ENCODE measurements at regions of chr12 and their contacts with region 1.

Region 1: DNA sequence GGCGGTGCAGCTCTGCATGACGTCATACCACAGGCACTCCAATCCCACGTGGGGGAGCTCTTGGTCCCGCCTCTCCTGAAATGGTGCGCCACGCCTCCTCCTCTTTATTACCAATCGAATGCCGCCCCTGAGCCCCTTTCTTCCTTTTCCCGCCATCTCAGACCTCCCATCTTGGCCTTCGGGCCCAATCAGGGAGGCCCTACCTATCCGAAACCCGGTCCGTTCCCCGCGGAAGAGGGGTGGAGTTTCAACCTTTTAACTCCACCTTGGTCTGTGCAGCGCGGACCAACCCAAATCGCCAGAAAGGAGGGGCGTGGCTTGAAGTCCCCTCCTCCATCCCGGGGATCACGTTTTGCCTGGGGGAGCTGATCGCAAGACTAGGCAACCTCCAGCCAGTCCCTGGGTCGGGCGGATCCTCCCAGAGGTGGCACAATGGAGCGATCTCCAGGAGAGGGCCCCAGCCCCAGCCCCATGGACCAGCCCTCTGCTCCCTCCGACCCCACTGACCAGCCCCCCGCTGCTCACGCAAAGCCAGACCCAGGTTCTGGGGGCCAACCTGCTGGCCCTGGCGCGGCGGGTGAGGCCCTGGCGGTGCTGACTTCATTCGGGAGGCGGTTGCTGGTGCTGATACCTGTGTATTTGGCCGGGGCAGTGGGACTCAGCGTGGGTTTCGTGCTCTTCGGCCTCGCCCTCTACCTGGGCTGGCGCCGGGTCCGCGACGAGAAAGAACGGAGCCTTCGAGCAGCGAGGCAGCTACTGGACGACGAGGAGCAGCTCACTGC is at the start of gene ESYT1:
- DNase-seq: peak; percentile 88 to 99 (median 98)
- ATAC-seq: peak; percentile 86 to 91 (median 89)
- H3K4me3 ChIP-seq: peak within 1 kb of the TSS; percentile 86 to 95
- H3K4me3 Mint-ChIP-seq: peak within 1 kb of the TSS; percentile 97 to 99 (median 98)
- H3K27ac ChIP-seq: peak within 1 kb of the TSS; percentile 76
- H3K27ac Mint-ChIP-seq: peak within 1 kb of the TSS; percentile 97
- H3K4me1 ChIP-seq: peaks cover 36 to 62% of the 10 kb centered on the region in 2 experiments
- H3K4me1 Mint-ChIP-seq: peaks cover 68 to 74% (median 72%) of the 10 kb centered on the region in 3 donors
- H3K27me3 ChIP-seq: no peaks in the 10 kb centered on the region
- H3K27me3 Mint-ChIP-seq: no peaks in the 10 kb centered on the region
- total RNA-seq, gene ESYT1: 181 to 298 (median 276) TPM

Region 2: DNA sequence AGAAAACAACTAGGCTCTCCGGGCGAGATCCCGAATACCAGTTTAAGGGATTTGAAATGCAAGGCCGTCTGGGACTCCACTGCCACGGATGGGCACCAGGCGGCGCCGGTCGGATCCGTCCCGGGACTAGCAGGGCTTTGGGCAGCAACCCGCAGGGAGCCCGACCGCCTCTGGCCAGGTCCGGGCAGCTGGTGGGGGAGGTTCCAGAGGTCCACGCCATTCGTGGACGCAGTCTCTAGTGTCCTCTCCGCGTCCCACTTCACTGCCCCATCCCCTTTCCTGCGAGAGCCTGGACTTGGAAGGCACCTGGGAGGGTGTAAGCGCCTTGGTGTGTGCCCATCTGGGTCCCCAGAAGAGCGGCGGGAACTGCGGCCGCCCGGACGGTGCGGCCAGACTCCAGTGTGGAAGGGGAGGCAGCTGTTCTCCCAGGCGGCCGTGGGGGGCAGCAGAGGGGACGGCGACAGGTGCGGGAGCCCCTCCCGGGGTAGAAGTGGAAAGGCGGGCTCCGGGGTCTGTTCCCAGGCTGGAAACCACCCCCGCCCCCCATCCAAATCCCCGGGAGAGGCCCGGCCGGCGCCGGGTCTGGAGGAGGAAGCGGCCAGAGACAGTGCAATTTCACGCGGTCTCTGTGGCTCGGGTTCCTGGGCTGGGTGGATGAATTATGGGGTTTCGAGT is 49.0 kb before region 1 on chr12:
- CTCF ChIA-PET with region 1: no interaction called
- POLR2A ChIA-PET with region 1: no interaction called
- DNase-seq: peak in 33 of 35 experiments; percentile 16 to 63 (median 34)
- ATAC-seq: peak; percentile 59 to 74 (median 60)
- H3K4me3 ChIP-seq: peak overlapping the region; percentile 69 to 70
- H3K4me3 Mint-ChIP-seq: peak overlapping the region; percentile 79 to 82 (median 80)
- H3K27ac ChIP-seq: no peak overlapping the region
- H3K27ac Mint-ChIP-seq: no peak overlapping the region
- H3K4me1 ChIP-seq: peaks cover 0 to 27% of the 10 kb centered on the region in 2 experiments
- H3K4me1 Mint-ChIP-seq: peaks cover 7 to 18% (median 9%) of the 10 kb centered on the region in 3 donors
- H3K27me3 ChIP-seq: peaks cover 3 to 48% of the 10 kb centered on the region in 2 experiments
- H3K27me3 Mint-ChIP-seq: peaks cover 0 to 11% of the 10 kb centered on the region in 2 donors

Region 3: GRCh38 chr12:56117778-56118687 is 10.0 kb before region 1 on chr12 and contains the start of gene ZC3H10:
- CTCF ChIA-PET with region 1: interaction called, 3 to 65 read pairs
- POLR2A ChIA-PET with region 1: interaction called, 3 to 33 read pairs
- DNase-seq: peak; percentile 87 to 99 (median 96)
- ATAC-seq: peak; percentile 76 to 79 (median 76)
- H3K4me3 ChIP-seq: peak within 1 kb of the TSS; percentile 79 to 94
- H3K4me3 Mint-ChIP-seq: peak within 1 kb of the TSS; percentile 94 to 99 (median 94)
- H3K27ac ChIP-seq: peak within 1 kb of the TSS; percentile 92
- H3K27ac Mint-ChIP-seq: peak within 1 kb of the TSS; percentile 97 to 98
- H3K4me1 ChIP-seq: peaks cover 11 to 29% of the 10 kb centered on the region in 2 experiments
- H3K4me1 Mint-ChIP-seq: peaks cover 34 to 39% (median 37%) of the 10 kb centered on the region in 3 donors
- H3K27me3 ChIP-seq: no peaks in the 10 kb centered on the region
- H3K27me3 Mint-ChIP-seq: no peaks in the 10 kb centered on the region
- total RNA-seq, gene ZC3H10: 8.4 to 15.1 (median 11.4) TPM

Region 4: DNA sequence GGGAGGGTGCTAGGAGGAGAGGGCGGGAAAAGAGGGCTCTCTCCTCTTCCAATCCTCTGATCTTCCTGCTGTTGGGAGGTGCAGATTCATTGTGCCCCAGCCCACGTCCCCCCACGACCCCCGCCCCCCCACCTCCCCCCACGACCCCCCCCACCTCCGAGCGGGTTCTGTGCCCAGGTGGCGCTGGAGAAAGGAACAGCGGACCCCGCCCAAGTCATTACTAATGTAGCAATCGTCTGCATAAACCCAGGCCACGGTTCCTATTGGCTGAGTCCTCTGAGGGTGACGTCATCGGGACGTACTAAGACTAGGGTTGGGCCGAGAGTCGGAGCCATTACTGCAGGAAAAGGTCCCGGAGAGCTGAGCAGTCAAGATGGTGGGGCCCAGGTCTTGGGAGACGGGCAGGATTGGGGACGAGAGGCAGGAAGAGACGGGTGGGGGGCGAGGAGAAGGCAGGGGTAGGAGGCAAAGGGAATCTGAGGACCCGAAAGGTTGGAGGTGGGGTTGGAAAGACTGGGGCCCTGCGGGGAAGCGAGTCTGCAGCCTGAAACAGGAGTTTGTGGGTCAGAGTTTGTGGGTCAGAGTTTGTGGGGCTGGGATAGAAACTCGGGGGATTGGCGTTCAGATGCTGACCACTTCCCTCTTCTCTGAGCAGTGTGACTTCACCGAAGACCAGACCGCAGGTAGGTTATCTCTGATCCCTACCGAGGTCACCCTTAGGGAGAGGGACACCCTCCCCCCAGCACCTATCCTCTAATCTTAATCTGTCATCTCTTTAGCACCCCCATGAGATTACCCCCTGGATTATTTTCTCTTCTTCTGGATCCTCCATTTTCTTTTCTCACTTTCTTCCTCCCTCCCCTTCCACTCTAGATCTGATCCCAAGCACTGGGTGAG is 30.2 kb after region 1 on chr12 and contains the start of gene MYL6:
- CTCF ChIA-PET with region 1: interaction called in 1 of 2 experiments, 10 read pairs
- POLR2A ChIA-PET with region 1: interaction called in 1 of 2 experiments, 5 read pairs
- DNase-seq: peak; percentile 65 to 97 (median 90)
- ATAC-seq: peak; percentile 85 to 88 (median 86)
- H3K4me3 ChIP-seq: peak within 1 kb of the TSS; percentile 91 to 99
- H3K4me3 Mint-ChIP-seq: peak within 1 kb of the TSS; percentile 89 to 99 (median 97)
- H3K27ac ChIP-seq: peak within 1 kb of the TSS; percentile 93
- H3K27ac Mint-ChIP-seq: peak within 1 kb of the TSS; percentile 94 to 98
- H3K4me1 ChIP-seq: peaks cover 18 to 51% of the 10 kb centered on the region in 2 experiments
- H3K4me1 Mint-ChIP-seq: peaks cover 42 to 56% (median 56%) of the 10 kb centered on the region in 3 donors
- H3K27me3 ChIP-seq: no peaks in the 10 kb centered on the region
- H3K27me3 Mint-ChIP-seq: no peaks in the 10 kb centered on the region
- total RNA-seq, gene MYL6: 506 to 663 (median 569) TPM

Region 5: DNA sequence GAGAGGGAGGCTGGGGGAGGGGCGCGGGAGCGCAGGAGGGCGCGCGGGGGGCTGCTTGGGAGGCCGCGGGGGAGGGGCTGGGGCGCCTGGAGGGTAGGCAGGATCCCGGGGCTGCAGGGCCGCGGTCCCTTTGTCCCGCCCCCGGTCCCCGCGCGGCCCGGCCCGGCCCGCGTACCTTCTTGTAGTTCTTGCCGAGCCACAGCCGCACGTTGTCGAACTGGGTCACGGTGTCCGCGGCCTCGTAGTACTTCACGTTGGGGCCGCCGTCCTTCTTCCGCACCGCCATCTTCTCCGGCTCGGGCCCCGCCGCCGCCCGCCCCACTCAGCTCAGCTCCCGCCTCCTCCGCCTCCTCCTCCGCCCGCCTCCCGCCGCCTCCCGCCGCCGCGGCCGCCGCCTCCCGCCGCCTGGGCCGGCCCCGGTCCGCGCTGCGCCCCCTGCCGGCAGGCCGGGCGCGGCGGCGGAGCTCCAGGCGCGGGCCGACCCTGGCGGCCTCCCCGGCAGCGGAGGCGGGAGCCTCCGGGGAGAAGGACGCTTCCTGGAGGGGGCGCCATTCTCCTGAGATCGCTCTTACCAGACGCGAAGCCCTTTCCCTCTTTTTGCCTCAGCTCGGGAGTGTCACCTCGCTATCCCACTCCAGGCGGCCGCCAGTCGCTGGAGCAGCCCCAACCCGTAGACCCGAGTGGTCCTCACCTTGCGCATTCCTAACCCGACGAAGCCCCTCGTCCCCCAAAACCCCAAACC is 61.3 kb after region 1 on chr12 and contains the start of gene SMARCC2:
- CTCF ChIA-PET with region 1: interaction called, 3 to 54 read pairs
- POLR2A ChIA-PET with region 1: interaction called in 1 of 2 experiments, 3 read pairs
- DNase-seq: peak; percentile 63 to 94 (median 76)
- ATAC-seq: peak; percentile 85 to 91 (median 87)
- H3K4me3 ChIP-seq: peak within 1 kb of the TSS; percentile 71 to 88
- H3K4me3 Mint-ChIP-seq: peak within 1 kb of the TSS; percentile 93 to 98 (median 96)
- H3K27ac ChIP-seq: peak within 1 kb of the TSS; percentile 86
- H3K27ac Mint-ChIP-seq: peak within 1 kb of the TSS; percentile 95 to 97
- H3K4me1 ChIP-seq: peaks cover 12 to 31% of the 10 kb centered on the region in 2 experiments
- H3K4me1 Mint-ChIP-seq: peaks cover 41 to 52% (median 46%) of the 10 kb centered on the region in 3 donors
- H3K27me3 ChIP-seq: no peaks in the 10 kb centered on the region
- H3K27me3 Mint-ChIP-seq: no peaks in the 10 kb centered on the region
- total RNA-seq, gene SMARCC2: 135 to 160 (median 159) TPM

Region 6: GRCh38 chr12:56551070-56551469 is 423.0 kb after region 1 on chr12:
- CTCF ChIA-PET with region 1: interaction called in 1 of 2 experiments, 12 read pairs
- POLR2A ChIA-PET with region 1: no interaction called
- DNase-seq: no peak
- ATAC-seq: no peak
- H3K4me3 ChIP-seq: no peak overlapping the region
- H3K4me3 Mint-ChIP-seq: no peak overlapping the region
- H3K27ac ChIP-seq: no peak overlapping the region
- H3K27ac Mint-ChIP-seq: no peak overlapping the region
- H3K4me1 ChIP-seq: no peaks in the 10 kb centered on the region
- H3K4me1 Mint-ChIP-seq: no peaks in the 10 kb centered on the region
- H3K27me3 ChIP-seq: no peaks in the 10 kb centered on the region
- H3K27me3 Mint-ChIP-seq: peaks cover 0 to 2% of the 10 kb centered on the region in 2 donors